Right ventricle myocardium inferior (tissue), 1 donor: ENCODE measurements at regions of chrX and their contacts with region 1.

Region 1: GRCh38 chrX:17689971-17690409 is 47.3 kb upstream of the SCML1 start:
- DNase-seq: no peak
- ATAC-seq: peak; percentile 60

Region 2: GRCh38 chrX:17242470-17242869 is 447.5 kb before region 1 on chrX:
- intact Hi-C with region 1: loop called (anchors 5 kb)
- DNase-seq: no peak
- ATAC-seq: no peak

Region 3: DNA sequence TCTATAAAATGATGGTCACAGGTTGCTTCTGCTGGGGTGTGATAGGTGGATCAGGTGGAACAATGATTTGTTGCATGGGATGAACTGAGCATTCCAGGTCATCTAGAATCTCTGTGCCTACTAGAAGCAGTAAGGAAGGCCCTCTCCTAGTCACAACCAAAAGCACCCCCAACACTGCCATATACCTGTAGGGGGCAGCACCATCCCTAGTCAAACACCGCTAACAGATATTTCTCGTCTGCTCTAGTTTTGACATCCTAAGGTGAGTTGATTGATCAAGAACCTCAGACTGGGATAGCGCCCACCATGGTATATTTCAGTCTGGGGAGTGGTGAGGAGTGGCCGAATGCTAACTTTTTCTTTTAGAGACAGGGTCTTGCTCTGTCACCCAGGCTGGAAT is 154.8 kb before region 1 on chrX:
- intact Hi-C with region 1: loop called (anchors 5 kb)
- DNase-seq: no peak
- ATAC-seq: no peak

Region 4: GRCh38 chrX:17597836-17598442 is 92.1 kb before region 1 on chrX:
- intact Hi-C with region 1: loop called (anchors 5 kb)
- DNase-seq: peak; percentile 70
- ATAC-seq: peak; percentile 69